Psoas muscle (tissue), 8 donors: ENCODE measurements at regions of chr12 and their contacts with region 1.

Region 1: DNA sequence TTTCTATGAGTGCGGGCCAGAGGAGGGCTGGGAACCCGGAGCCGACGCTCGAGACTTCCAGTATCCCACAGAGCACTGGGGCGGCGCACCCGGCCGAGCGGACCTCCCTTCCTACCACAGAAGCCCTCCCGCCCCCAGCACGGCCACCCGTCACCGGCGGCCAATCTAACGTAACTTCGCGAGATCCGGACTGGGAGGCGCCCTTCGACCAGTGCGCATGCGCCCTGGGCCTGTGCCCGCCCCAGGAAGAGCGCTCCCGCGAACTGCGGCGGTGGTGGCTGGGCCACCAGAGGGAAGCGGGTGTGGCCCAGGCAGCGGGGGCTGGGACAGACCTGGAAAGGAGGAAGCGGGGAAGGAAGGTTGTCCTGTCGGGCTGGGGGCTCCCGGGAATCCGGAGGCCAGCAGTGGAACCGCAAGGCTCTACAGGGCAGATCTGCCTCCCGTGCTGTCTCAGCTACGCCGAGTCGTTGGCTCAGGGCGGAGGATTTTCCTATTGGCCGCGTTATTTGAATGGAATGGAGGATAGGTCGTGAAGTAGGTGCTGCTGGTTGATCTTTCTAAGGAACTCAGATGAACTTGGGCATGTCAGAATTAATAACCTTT is at the start of gene PPP1R12A:
- DNase-seq: peak; percentile 96 to 98
- ATAC-seq: peak; percentile 97 to 98 (median 98)
- H3K4me3 ChIP-seq: peak within 1 kb of the TSS; percentile 92
- H3K27ac ChIP-seq: peak within 1 kb of the TSS; percentile 89
- H3K4me1 ChIP-seq: peaks cover 35% of the 10 kb centered on the region
- H3K27me3 ChIP-seq: no peaks in the 10 kb centered on the region
- CTCF ChIP-seq: peak; percentile 20
- total RNA-seq, gene PPP1R12A: 37.8 to 51.2 (median 41.4) TPM

Region 2: DNA sequence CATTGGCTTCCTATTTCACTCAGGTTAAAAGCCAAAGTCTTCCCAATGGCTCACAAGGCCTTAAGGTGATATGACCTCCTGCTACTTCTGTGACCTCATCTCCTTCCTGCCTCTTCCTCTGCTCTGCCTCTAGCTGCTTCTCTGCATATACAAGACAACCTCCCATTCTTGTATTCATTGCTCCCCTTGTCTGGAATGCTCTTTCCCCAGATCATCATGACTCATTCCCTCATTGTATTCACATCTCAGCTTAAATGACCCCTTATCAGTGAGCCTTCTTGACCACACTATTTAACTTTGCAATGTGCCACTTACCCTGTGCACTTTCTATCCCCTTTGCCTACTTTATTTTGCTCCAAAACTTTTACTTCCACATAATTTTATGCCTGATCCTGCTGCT is 90.4 kb before region 1 on chr12:
- intact Hi-C with region 1: loop called in 1 of 2 experiments (anchors 10 kb)
- DNase-seq: no peak
- ATAC-seq: no peak
- H3K4me3 ChIP-seq: no peak overlapping the region
- H3K27ac ChIP-seq: no peak overlapping the region
- H3K4me1 ChIP-seq: peaks cover 8% of the 10 kb centered on the region
- H3K27me3 ChIP-seq: no peaks in the 10 kb centered on the region
- CTCF ChIP-seq: no peak

Region 3: GRCh38 chr12:79858518-79858917 is 76.6 kb before region 1 on chr12:
- intact Hi-C with region 1: no loop called
- DNase-seq: no peak
- ATAC-seq: no peak
- H3K4me3 ChIP-seq: no peak overlapping the region
- H3K27ac ChIP-seq: no peak overlapping the region
- H3K4me1 ChIP-seq: no peaks in the 10 kb centered on the region
- H3K27me3 ChIP-seq: no peaks in the 10 kb centered on the region
- CTCF ChIP-seq: no peak

Region 4: GRCh38 chr12:79886917-79887519 is 48.1 kb before region 1 on chr12:
- intact Hi-C with region 1: loop called in 1 of 2 experiments (anchors 5 kb)
- DNase-seq: no peak
- ATAC-seq: peak in 3 of 4 donors; percentile 42 to 82 (median 68)
- H3K4me3 ChIP-seq: no peak overlapping the region
- H3K27ac ChIP-seq: no peak overlapping the region
- H3K4me1 ChIP-seq: peaks cover 62% of the 10 kb centered on the region
- H3K27me3 ChIP-seq: no peaks in the 10 kb centered on the region
- CTCF ChIP-seq: peak; percentile 56

Region 5: DNA sequence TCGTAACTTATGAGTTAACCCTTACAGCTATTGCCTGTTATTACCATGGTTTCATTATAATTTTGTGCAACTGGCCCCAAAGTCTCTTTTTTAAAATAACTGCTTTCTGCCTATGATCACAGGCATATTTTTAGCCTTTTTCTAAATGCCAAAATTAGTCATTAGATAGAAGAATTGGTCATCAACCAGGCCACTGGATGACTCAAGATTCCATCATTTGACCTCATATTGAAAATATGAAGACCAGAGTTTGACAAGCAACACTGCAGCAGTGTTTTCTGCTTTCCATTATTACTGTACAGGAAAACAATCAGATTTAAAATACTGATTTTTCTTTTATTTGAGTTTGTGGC is 109.5 kb after region 1 on chr12:
- intact Hi-C with region 1: loop called in 1 of 2 experiments (anchors 10 kb)
- DNase-seq: no peak
- ATAC-seq: no peak
- H3K4me3 ChIP-seq: no peak overlapping the region
- H3K27ac ChIP-seq: no peak overlapping the region
- H3K4me1 ChIP-seq: no peaks in the 10 kb centered on the region
- H3K27me3 ChIP-seq: no peaks in the 10 kb centered on the region
- CTCF ChIP-seq: no peak

Region 6: GRCh38 chr12:80186727-80187217 is 251.7 kb after region 1 on chr12:
- intact Hi-C with region 1: loop called in 1 of 2 experiments (anchors 2 kb)
- DNase-seq: no peak
- ATAC-seq: peak; percentile 81 to 91 (median 84)
- H3K4me3 ChIP-seq: no peak overlapping the region
- H3K27ac ChIP-seq: peak overlapping the region; percentile 86
- H3K4me1 ChIP-seq: peaks cover 25% of the 10 kb centered on the region
- H3K27me3 ChIP-seq: no peaks in the 10 kb centered on the region
- CTCF ChIP-seq: peak; percentile 66